CD8-positive, alpha-beta memory T cell (primary cell): ENCODE measurements at regions of chr1 and their contacts with region 1.

Region 1: GRCh38 chr1:226407497-226408284 is at the start of gene PARP1:
- DNase-seq: peak; percentile 83 to 92 (median 89)
- H3K4me3 ChIP-seq: peak within 1 kb of the TSS; percentile 56
- H3K4me3 Mint-ChIP-seq: peak within 1 kb of the TSS; percentile 92 to 99 (median 96)
- H3K27ac ChIP-seq: peak within 1 kb of the TSS; percentile 71
- H3K27ac Mint-ChIP-seq: peak within 1 kb of the TSS; percentile 87 to 99 (median 96)
- H3K4me1 ChIP-seq: peaks cover 42% of the 10 kb centered on the region
- H3K4me1 Mint-ChIP-seq: peaks cover 40 to 55% (median 48%) of the 10 kb centered on the region in 3 donors
- H3K27me3 ChIP-seq: no peaks in the 10 kb centered on the region
- H3K27me3 Mint-ChIP-seq: no peaks in the 10 kb centered on the region
- total RNA-seq, gene PARP1: 224 to 234 TPM

Region 2: DNA sequence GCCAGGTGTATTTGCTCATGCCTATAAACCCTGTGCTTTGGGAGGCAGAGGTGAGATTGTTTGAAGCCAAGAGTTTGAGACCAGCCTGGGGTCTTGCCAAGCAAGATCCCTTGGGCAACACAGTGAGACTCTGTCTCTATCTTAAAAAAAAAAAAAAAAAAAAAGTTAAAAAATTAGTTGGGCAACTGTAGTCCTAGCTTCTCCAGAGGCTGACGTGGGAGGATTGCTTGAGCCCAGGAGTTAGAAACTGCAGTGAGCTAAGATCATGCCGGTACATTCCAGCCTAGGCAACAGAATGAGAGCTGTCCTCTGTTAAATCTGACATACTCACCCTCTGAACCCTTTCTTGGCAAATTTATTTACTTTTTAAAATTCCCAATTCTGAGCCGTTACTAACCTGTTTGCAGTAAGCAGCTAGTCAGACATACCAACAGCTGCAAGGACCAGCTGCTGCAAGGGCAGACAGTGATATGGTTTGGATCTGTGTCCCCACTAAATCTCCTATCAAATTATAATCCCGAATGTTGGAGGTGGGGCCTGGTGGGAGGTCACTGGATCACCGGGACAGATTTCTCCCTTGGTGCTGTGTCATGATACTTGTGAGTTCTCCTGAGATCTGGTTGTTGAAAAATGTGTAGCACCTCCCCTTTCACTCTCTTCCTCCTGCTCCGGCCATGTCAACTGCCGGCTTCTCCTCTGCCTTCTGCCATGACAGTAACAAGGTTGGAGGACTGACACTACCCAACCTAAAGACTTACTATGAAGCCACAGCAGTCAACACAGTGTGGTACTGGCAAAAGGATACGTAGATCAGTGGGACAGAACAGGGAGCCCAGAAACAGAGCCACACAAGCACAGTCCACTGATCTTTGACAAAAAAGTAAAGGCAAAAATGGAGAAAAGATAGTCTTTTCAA is 10.4 kb before region 1 on chr1:
- CTCF ChIA-PET with region 1: interaction called, 23 read pairs
- POLR2A ChIA-PET with region 1: interaction called, 3 read pairs
- DNase-seq: no peak
- H3K4me3 ChIP-seq: no peak overlapping the region
- H3K4me3 Mint-ChIP-seq: no peak overlapping the region
- H3K27ac ChIP-seq: no peak overlapping the region
- H3K27ac Mint-ChIP-seq: peak overlapping the region in 6 of 8 donors; percentile 36 to 67 (median 58)
- H3K4me1 ChIP-seq: no peaks in the 10 kb centered on the region
- H3K4me1 Mint-ChIP-seq: peaks cover 48 to 78% (median 74%) of the 10 kb centered on the region in 3 donors
- H3K27me3 ChIP-seq: no peaks in the 10 kb centered on the region
- H3K27me3 Mint-ChIP-seq: no peaks in the 10 kb centered on the region

Region 3: GRCh38 chr1:226417830-226418546 is 10.3 kb after region 1 on chr1:
- CTCF ChIA-PET with region 1: interaction called, 93 read pairs
- POLR2A ChIA-PET with region 1: no interaction called
- DNase-seq: peak in 2 of 5 donors; percentile 39 to 43
- H3K4me3 ChIP-seq: no peak overlapping the region
- H3K4me3 Mint-ChIP-seq: peak overlapping the region in 3 of 7 donors; percentile 6 to 41 (median 40)
- H3K27ac ChIP-seq: no peak overlapping the region
- H3K27ac Mint-ChIP-seq: peak overlapping the region in 6 of 8 donors; percentile 54 to 90 (median 71)
- H3K4me1 ChIP-seq: no peaks in the 10 kb centered on the region
- H3K4me1 Mint-ChIP-seq: peaks cover 10 to 12% (median 11%) of the 10 kb centered on the region in 3 donors
- H3K27me3 ChIP-seq: no peaks in the 10 kb centered on the region
- H3K27me3 Mint-ChIP-seq: no peaks in the 10 kb centered on the region

Region 4: GRCh38 chr1:226424228-226425003 is 16.7 kb after region 1 on chr1:
- CTCF ChIA-PET with region 1: interaction called, 93 read pairs
- POLR2A ChIA-PET with region 1: interaction called, 24 read pairs
- DNase-seq: peak in 2 of 5 donors; percentile 20 to 41
- H3K4me3 ChIP-seq: no peak overlapping the region
- H3K4me3 Mint-ChIP-seq: no peak overlapping the region
- H3K27ac ChIP-seq: no peak overlapping the region
- H3K27ac Mint-ChIP-seq: no peak overlapping the region
- H3K4me1 ChIP-seq: peaks cover 14% of the 10 kb centered on the region
- H3K4me1 Mint-ChIP-seq: peaks cover 12 to 26% (median 17%) of the 10 kb centered on the region in 3 donors
- H3K27me3 ChIP-seq: no peaks in the 10 kb centered on the region
- H3K27me3 Mint-ChIP-seq: no peaks in the 10 kb centered on the region

Region 5: GRCh38 chr1:226444901-226445300 is 37.2 kb after region 1 on chr1:
- CTCF ChIA-PET with region 1: interaction called, 33 read pairs
- POLR2A ChIA-PET with region 1: interaction called, 14 read pairs
- DNase-seq: peak; percentile 27 to 85 (median 78)
- H3K4me3 ChIP-seq: no peak overlapping the region
- H3K4me3 Mint-ChIP-seq: peak overlapping the region in 6 of 7 donors; percentile 2 to 84 (median 60)
- H3K27ac ChIP-seq: no peak overlapping the region
- H3K27ac Mint-ChIP-seq: peak overlapping the region; percentile 5 to 94 (median 88)
- H3K4me1 ChIP-seq: peaks cover 33% of the 10 kb centered on the region
- H3K4me1 Mint-ChIP-seq: peaks cover 26 to 33% (median 29%) of the 10 kb centered on the region in 3 donors
- H3K27me3 ChIP-seq: no peaks in the 10 kb centered on the region
- H3K27me3 Mint-ChIP-seq: no peaks in the 10 kb centered on the region

Region 6: GRCh38 chr1:226457307-226457712 is 49.6 kb after region 1 on chr1:
- CTCF ChIA-PET with region 1: interaction called, 19 read pairs
- POLR2A ChIA-PET with region 1: interaction called, 15 read pairs
- DNase-seq: peak; percentile 48 to 72 (median 65)
- H3K4me3 ChIP-seq: peak overlapping the region; percentile 19
- H3K4me3 Mint-ChIP-seq: peak overlapping the region; percentile 67 to 94 (median 89)
- H3K27ac ChIP-seq: no peak overlapping the region
- H3K27ac Mint-ChIP-seq: peak overlapping the region; percentile 57 to 95 (median 90)
- H3K4me1 ChIP-seq: peaks cover 8% of the 10 kb centered on the region
- H3K4me1 Mint-ChIP-seq: peaks cover 15 to 21% (median 17%) of the 10 kb centered on the region in 3 donors
- H3K27me3 ChIP-seq: no peaks in the 10 kb centered on the region
- H3K27me3 Mint-ChIP-seq: peaks cover 0 to 3% of the 10 kb centered on the region in 2 donors

Region 7: DNA sequence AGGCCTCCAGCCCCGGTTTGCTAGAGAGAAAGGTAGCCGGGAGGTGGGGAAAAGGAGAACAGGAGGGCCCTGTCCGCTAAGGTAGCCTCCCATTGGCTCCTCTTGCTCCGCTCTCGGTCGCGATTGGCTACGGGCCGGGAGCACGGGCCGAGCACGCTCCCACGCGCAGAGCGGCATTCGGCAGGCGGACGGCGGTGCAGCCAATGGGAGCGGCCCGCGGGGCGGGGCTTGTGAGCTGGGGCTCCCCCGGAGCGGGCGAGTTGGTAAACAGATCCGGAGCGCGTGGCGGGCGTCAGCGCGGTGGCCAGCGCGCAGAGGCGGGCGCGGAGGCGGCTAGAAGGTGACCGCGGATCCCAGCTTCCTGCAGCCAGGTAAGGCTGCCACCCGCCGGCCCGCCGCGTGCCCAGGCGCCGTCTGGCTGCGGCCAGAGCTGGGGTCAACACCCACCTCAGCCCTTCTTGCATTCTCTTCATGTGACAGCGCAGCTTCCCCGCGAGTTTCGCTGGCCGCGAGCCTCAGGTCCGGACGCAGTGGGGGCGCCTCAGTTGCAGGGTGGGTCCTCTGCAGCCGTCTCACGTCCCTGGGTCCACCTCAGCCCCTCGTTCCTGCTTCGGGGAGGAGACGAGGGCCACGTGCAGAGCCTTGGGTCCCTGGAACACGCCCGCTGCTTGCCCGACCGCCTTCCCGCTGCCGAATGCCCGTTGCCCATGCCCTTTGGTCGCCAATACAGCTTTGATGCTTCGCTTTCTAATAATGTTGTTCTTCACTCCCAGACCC is 532.5 kb after region 1 on chr1 and contains the start of gene COQ8A:
- CTCF ChIA-PET with region 1: interaction called, 6 read pairs
- POLR2A ChIA-PET with region 1: interaction called, 13 read pairs
- DNase-seq: peak; percentile 97 to 100 (median 99)
- H3K4me3 ChIP-seq: peak within 1 kb of the TSS; percentile 85
- H3K4me3 Mint-ChIP-seq: peak within 1 kb of the TSS; percentile 86 to 95 (median 89)
- H3K27ac ChIP-seq: peak within 1 kb of the TSS; percentile 94
- H3K27ac Mint-ChIP-seq: peak within 1 kb of the TSS; percentile 93 to 98 (median 97)
- H3K4me1 ChIP-seq: peaks cover 43% of the 10 kb centered on the region
- H3K4me1 Mint-ChIP-seq: peaks cover 45 to 59% (median 58%) of the 10 kb centered on the region in 3 donors
- H3K27me3 ChIP-seq: no peaks in the 10 kb centered on the region
- H3K27me3 Mint-ChIP-seq: peaks cover 0 to 3% of the 10 kb centered on the region in 2 donors
- total RNA-seq, gene COQ8A: 30.7 to 35.2 TPM